Esophagus squamous epithelium (tissue), 5 donors: ENCODE measurements at regions of chr5 and their contacts with region 1.

Region 1: GRCh38 chr5:177311723-177312648 is at the start of gene MXD3:
- DNase-seq: peak; percentile 76
- H3K4me3 ChIP-seq: peak within 1 kb of the TSS; percentile 40 to 71 (median 56)
- H3K27ac ChIP-seq: peak within 1 kb of the TSS; percentile 62 to 87 (median 72)
- H3K4me1 ChIP-seq: peaks cover 27 to 57% (median 28%) of the 10 kb centered on the region in 3 donors
- H3K27me3 ChIP-seq: no peaks in the 10 kb centered on the region
- CTCF ChIP-seq: no peak
- POLR2A ChIP-seq: peak in 1 of 4 donors; percentile 38
- total RNA-seq, gene MXD3: 7.4 to 15.3 (median 9.5) TPM

Region 2: GRCh38 chr5:177390363-177391300 is 78.6 kb after region 1 on chr5:
- intact Hi-C with region 1: loop called (anchors 10 kb)
- DNase-seq: no peak
- H3K4me3 ChIP-seq: peak overlapping the region in 1 of 4 donors; percentile 40
- H3K27ac ChIP-seq: peak overlapping the region; percentile 77 to 89 (median 84)
- H3K4me1 ChIP-seq: peaks cover 32 to 57% (median 47%) of the 10 kb centered on the region in 3 donors
- H3K27me3 ChIP-seq: peaks cover 0 to 7% (median 0%) of the 10 kb centered on the region in 4 donors
- CTCF ChIP-seq: peak; percentile 98 to 100 (median 99)
- POLR2A ChIP-seq: no peak

Region 3: GRCh38 chr5:177454397-177455035 is 142.5 kb after region 1 on chr5:
- intact Hi-C with region 1: loop called (anchors 10 kb)
- DNase-seq: peak; percentile 63
- H3K4me3 ChIP-seq: peak overlapping the region; percentile 43 to 76 (median 60)
- H3K27ac ChIP-seq: peak overlapping the region; percentile 68 to 91 (median 80)
- H3K4me1 ChIP-seq: peaks cover 34 to 71% (median 40%) of the 10 kb centered on the region in 3 donors
- H3K27me3 ChIP-seq: peaks cover 0 to 30% (median 0%) of the 10 kb centered on the region in 4 donors
- CTCF ChIP-seq: peak; percentile 96 to 99 (median 98)
- POLR2A ChIP-seq: no peak

Region 4: DNA sequence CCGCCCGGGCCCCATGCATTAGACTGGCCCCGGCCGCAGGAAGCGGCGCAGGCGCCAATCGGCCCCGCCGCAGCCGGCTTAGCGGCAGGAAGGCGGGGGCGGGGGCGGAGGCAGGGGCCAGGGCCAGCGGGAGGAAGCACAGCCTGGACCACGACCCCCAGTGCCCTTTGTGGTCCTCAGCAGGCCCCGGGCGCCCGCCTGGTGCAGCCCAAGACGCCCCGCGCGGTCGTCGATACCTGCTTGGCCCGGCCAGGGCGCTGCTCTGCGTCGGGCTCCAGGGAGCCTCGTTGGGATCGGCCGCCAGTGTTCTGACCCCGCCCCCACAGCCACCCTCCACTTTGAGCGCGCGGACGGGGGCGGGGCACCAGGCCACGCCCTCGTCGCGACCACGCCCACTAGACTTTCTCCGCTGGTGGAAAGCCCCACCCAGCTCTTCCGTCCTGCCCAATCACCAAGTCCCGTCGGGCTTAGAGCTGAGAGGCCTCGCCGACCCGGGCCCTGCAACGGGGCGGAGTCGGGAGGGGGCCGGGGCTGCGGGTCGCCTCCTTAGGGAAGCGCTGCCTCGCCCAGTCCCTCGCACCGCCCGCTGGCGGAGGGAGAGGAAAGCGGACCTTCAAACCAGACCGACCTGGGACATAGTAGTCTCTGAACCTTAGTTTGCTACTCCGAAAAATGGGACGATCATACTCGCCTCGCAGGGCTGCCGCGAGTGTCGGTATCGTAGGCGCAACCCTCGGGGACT is 185.5 kb after region 1 on chr5 and contains the start of gene PDLIM7:
- intact Hi-C with region 1: loop called (anchors 10 kb)
- DNase-seq: peak; percentile 59
- H3K4me3 ChIP-seq: peak within 1 kb of the TSS; percentile 61 to 93 (median 76)
- H3K27ac ChIP-seq: peak within 1 kb of the TSS; percentile 90 to 98 (median 94)
- H3K4me1 ChIP-seq: peaks cover 46 to 80% (median 58%) of the 10 kb centered on the region in 3 donors
- H3K27me3 ChIP-seq: peaks cover 0 to 8% (median 0%) of the 10 kb centered on the region in 4 donors
- CTCF ChIP-seq: peak in 1 of 6 experiments; percentile 21
- POLR2A ChIP-seq: peak in 2 of 4 donors; percentile 94
- total RNA-seq, gene PDLIM7: 17.1 to 81.6 (median 33.6) TPM